Activated naive CD4-positive, alpha-beta T cell treated with anti-CD3 and anti-CD28 coated beads, Interleukin-2, amount 10 ng/mL, durations not matched to agents 7 days and 5 days (primary cell): ENCODE measurements at regions of chr1 and their contacts with region 1.

Region 1: GRCh38 chr1:2137257-2138121 is 57.1 kb downstream of the FAAP20 start:
- DNase-seq: no peak
- H3K4me3 Mint-ChIP-seq: no peak overlapping the region
- H3K27ac Mint-ChIP-seq: no peak overlapping the region
- H3K4me1 Mint-ChIP-seq: peaks cover 28% of the 10 kb centered on the region
- H3K27me3 Mint-ChIP-seq: peaks cover 27% of the 10 kb centered on the region

Region 2: GRCh38 chr1:2003278-2004131 is 134.0 kb before region 1 on chr1 and contains the start of gene CFAP74:
- CTCF ChIA-PET with region 1: no interaction called
- DNase-seq: peak; percentile 39
- H3K4me3 Mint-ChIP-seq: no peak within 1 kb of the TSS
- H3K27ac Mint-ChIP-seq: no peak within 1 kb of the TSS
- H3K4me1 Mint-ChIP-seq: no peaks in the 10 kb centered on the region
- H3K27me3 Mint-ChIP-seq: peaks cover 72% of the 10 kb centered on the region

Region 3: DNA sequence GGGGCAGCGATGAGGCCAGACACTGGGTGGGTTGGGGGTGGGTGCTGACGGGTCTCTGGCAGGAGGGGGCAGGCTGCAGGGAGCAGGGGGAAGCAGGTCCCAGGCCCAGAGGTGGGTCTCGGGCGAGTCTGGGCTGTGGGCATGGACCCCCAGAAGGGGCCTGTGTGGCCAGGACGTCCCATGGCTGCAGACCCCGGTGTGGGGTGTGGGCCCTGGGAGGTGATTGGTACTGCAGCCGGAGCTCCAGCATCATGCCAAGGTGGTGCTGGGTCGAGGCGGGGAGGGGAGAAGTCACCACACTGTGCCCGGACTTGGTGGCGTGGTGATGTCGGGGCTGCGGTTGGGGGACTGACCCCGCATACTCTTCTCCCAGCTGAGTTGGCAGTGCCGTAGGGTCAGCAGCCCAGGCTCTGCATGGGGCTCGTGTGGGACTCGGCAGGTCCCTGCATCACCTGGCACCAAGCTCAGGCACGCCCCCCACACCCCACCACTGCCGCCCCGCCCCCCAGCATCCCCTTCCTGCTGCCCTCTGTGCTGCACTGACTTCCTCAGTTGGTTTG is 56.1 kb before region 1 on chr1:
- CTCF ChIA-PET with region 1: no interaction called
- DNase-seq: no peak
- H3K4me3 Mint-ChIP-seq: no peak overlapping the region
- H3K27ac Mint-ChIP-seq: no peak overlapping the region
- H3K4me1 Mint-ChIP-seq: no peaks in the 10 kb centered on the region
- H3K27me3 Mint-ChIP-seq: no peaks in the 10 kb centered on the region

Region 4: DNA sequence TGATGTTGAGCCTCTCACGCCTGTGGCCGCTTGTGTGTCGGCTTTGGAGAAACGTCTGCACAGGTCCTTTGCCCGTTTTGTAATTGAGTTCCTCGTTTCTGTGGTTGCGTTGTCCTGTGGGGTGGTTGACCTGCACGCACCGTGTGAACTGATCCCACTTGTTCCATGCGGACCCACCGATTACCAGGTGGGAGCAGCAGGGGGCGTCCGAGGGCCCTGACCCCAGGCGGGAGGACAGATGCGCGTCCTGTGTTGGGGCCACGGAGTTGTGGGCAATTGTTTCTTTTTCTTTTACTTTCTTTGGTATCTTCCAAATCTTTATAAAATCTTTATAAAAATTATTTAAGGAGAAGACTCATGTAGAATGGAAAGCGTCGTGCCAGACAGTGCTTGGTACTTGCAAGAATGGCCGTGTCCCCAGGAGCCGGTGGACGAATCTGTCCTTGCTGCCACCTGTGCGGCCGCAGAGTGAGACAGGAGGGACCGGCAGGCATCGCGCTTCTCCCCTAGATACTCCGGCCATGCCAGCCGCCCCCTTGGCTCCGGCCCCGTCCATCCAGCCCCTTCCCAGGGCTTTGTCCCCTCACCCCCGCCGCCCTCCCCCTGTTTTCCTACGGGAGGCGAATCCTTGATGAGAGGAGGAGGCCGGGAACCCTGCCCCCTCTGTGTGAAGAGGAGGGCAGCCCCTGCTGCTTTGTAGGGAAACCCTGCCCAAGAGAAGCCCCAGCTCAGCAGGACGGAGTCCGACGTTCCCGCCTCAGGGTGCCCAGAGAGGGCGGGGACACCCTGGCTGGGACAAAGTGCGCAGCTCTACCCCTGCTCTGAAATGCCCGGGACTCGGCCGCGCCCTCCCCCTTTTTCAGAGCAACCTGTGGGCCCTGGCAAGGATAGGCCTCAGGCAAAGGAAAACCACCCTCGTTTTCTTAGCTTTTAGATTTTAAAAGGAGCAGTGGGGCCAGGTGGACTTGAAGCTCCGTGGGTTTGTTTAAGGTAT is 45.6 kb before region 1 on chr1:
- CTCF ChIA-PET with region 1: interaction called, 20 read pairs
- DNase-seq: peak; percentile 71
- H3K4me3 Mint-ChIP-seq: no peak overlapping the region
- H3K27ac Mint-ChIP-seq: no peak overlapping the region
- H3K4me1 Mint-ChIP-seq: no peaks in the 10 kb centered on the region
- H3K27me3 Mint-ChIP-seq: peaks cover 3% of the 10 kb centered on the region

Region 5: GRCh38 chr1:2148691-2149090 is 11.2 kb after region 1 on chr1:
- CTCF ChIA-PET with region 1: interaction called, 35 read pairs
- DNase-seq: peak; percentile 85
- H3K4me3 Mint-ChIP-seq: no peak overlapping the region
- H3K27ac Mint-ChIP-seq: no peak overlapping the region
- H3K4me1 Mint-ChIP-seq: peaks cover 25% of the 10 kb centered on the region
- H3K27me3 Mint-ChIP-seq: no peaks in the 10 kb centered on the region

Region 6: DNA sequence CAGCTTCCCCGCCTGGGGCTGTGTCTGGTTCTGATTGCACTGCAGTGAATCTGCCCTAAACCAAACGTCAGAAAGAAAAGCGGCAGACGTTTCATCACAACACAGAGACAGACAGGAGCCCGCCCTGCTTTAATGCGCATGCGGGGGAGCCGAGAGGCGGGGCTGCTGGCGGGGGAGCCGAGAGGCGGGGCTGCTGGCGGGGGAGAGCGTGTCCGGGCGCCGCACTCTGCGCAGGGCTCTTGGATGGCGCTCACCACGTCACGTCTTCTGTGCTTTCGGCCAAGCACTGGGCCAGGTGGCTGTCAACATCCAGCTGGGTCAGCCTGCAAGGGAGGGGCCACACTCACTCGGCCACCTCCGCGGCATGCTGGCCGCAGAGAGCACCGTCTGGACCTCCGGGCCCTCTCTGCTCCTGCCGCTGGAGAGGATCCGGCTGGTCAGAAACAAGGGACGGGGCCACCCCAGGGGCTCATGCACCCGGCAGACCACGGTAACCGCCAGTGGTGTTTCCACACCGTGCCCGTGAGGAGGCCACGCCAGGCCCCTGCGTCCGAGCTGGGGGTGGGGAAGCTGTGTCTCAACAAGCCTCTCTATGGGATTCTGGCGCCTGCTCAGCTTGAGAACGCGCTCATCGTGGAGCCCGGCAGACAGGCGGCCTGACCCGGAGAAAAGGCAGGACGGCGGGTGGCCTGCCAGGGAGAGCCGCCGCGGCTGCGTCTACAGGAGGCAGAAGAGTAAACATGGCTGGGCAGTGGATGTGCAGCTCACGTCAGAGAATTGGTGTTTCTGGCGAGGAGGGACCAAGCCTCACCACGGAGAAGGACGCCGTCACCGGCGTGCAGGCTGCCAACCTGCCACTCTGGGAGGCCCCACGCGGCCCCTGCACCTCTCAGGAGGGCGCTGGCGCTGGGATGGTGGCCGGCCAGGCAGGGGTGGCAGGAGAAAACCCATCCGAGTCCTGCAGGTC is 52.3 kb after region 1 on chr1:
- CTCF ChIA-PET with region 1: no interaction called
- DNase-seq: peak; percentile 94
- H3K4me3 Mint-ChIP-seq: peak overlapping the region; percentile 75
- H3K27ac Mint-ChIP-seq: peak overlapping the region; percentile 96
- H3K4me1 Mint-ChIP-seq: peaks cover 30% of the 10 kb centered on the region
- H3K27me3 Mint-ChIP-seq: no peaks in the 10 kb centered on the region